Activated naive CD4-positive, alpha-beta T cell treated with anti-CD3 and anti-CD28 coated beads for 36 hours (primary cell): ENCODE measurements at regions of chr7 and their contacts with region 1.

Region 1: DNA sequence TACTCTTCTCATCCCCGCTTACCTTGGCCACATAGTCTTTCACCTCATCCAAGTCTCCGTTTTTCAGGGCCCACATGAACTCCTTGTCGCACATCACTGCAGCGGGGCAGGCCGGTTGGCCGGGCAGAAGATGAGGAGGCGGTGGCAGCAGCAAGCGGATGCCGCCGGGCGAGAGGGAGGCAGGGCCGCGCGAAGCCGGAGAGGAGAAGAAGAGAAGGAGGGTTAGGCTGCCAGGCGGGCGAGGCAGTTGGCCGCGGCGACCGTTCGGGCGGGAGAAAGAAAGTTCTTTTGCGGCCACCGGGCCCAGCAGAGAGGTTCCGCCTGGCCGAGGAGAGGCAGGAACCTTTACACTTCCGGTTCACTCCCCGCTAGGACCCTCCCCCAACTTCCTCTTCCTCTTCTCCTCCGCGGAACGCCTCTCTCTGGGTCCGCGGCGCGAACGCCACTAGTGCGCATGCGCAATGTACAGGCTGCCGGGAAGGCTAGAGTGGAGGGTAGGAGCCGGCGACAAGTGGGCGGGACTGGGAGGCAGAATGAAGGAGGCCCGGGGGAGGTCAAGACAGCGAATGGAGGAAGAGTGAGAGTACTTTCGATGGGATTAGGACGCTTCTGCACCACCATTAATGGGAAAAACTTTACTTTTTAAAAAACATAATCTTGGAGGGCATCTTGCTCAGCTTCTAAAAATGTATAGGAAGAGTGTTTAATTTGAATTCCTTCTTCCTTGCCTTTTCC is at the start of gene MTPN:
- DNase-seq: peak; percentile 98
- H3K4me3 Mint-ChIP-seq: peak within 1 kb of the TSS; percentile 98
- H3K27ac Mint-ChIP-seq: peak within 1 kb of the TSS; percentile 86
- H3K4me1 Mint-ChIP-seq: peaks cover 71% of the 10 kb centered on the region
- H3K27me3 Mint-ChIP-seq: no peaks in the 10 kb centered on the region
- total RNA-seq, gene MTPN: 106 to 108 TPM

Region 2: DNA sequence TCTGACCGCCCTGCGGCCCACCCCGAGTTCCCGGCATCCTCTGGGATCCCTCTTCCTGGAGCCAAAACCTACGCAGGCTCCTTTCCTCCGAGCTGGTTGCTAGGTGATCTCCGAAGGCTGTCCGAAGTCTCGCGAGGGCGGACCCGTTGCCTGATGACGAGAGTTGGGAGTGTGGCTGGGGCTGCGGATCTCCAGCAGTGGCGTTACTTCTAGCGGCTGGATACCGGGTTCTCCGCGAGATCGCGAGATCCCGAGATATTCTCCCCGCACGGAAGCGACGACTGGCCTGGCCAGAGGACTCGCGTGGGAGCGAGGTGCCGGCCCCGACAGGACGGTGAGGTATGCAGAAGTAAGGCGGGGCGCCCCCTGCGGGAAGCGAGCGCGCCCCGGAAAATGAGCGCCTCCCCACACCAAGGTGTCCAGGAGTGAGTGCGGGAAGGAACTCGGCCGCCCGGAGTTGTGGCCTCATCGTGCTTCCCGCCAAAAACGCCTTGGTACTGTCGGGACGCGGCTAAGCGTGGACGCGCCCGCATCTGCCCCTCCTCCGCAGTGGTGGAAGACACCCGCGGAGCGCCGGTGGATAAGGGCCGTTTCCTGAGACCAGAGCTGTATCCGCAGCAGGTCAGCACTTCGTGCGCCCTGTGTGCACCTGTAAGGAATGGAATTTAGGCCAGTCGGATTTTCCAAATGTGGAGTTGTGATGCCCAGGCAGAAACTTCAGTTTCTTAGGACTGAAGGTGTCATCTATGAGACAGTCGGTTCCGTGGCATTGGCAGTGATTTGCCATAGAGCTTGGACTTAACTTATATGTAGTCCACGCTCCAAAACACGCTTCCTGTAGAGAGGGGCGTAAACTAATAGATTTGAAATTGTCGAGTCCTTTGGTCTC is 990.6 kb before region 1 on chr7 and contains the start of gene AGBL3:
- CTCF ChIA-PET with region 1: no interaction called
- intact Hi-C with region 1: loop called (anchors 5 kb)
- DNase-seq: peak; percentile 97
- H3K4me3 Mint-ChIP-seq: peak within 1 kb of the TSS; percentile 96
- H3K27ac Mint-ChIP-seq: peak within 1 kb of the TSS; percentile 98
- H3K4me1 Mint-ChIP-seq: peaks cover 32% of the 10 kb centered on the region
- H3K27me3 Mint-ChIP-seq: no peaks in the 10 kb centered on the region
- total RNA-seq, gene AGBL3: 2.6 to 3.6 TPM

Region 3: GRCh38 chr7:135558337-135558767 is 418.8 kb before region 1 on chr7:
- CTCF ChIA-PET with region 1: no interaction called
- intact Hi-C with region 1: loop called (anchors 1 kb)
- DNase-seq: peak; percentile 79
- H3K4me3 Mint-ChIP-seq: no peak overlapping the region
- H3K27ac Mint-ChIP-seq: no peak overlapping the region
- H3K4me1 Mint-ChIP-seq: peaks cover 29% of the 10 kb centered on the region
- H3K27me3 Mint-ChIP-seq: no peaks in the 10 kb centered on the region

Region 4: DNA sequence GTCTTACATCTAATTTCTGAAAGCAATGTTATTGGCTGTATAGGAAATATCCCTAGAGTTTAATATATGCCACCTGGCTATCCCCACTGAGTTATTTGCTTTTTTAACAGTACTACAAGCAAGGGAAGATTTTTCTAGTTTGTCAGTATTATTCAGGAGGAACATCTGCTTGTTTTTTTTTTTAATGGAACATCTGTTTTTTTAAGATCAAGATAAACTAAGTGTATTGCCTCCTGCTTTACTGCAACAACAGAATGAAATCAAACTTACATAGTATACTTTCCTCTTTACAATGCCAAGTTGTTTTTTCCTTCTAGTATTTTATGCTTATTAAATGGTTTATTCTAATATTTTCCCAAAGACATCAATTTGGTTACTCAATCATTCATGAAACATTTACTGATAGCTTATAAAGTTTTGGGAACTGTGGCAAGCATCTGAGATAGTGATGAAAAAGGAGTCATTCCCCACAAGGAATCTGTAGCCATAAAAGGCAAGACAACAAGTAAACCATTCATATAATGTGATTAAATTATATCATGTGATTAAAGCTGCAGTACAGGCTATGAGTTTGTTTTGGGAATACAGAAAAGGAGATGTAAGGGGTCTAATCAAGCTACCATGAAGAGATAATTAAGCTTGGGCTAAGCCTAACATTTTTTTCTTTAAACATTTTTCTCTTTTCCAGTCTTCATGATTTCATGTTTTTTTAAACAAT is 17.4 kb before region 1 on chr7:
- CTCF ChIA-PET with region 1: no interaction called
- intact Hi-C with region 1: no loop called
- DNase-seq: no peak
- H3K4me3 Mint-ChIP-seq: no peak overlapping the region
- H3K27ac Mint-ChIP-seq: no peak overlapping the region
- H3K4me1 Mint-ChIP-seq: peaks cover 46% of the 10 kb centered on the region
- H3K27me3 Mint-ChIP-seq: no peaks in the 10 kb centered on the region

Region 5: DNA sequence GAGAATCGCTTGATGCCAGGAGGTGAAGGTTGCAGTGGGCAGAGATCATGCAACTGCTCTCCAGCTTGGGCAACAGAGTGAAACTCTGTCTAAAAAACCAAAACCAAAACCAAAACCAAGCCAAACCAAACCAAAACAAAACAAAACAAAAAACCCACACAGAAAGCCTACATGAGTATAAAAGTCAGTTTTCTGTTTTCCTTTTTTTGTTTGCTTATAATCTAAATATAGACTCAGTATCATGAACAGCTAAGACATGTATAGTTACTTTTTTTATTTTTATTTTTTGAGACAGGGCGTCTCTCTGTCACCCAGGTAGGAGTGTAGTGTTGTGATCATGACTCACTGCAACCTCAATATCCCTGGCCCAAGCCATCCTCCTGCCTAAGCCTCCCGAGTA is 16.8 kb after region 1 on chr7:
- CTCF ChIA-PET with region 1: no interaction called
- intact Hi-C with region 1: loop called (anchors 1 kb)
- DNase-seq: no peak
- H3K4me3 Mint-ChIP-seq: no peak overlapping the region
- H3K27ac Mint-ChIP-seq: no peak overlapping the region
- H3K4me1 Mint-ChIP-seq: peaks cover 17% of the 10 kb centered on the region
- H3K27me3 Mint-ChIP-seq: peaks cover 5% of the 10 kb centered on the region

Region 6: GRCh38 chr7:136030862-136031318 is 53.7 kb after region 1 on chr7:
- CTCF ChIA-PET with region 1: no interaction called
- intact Hi-C with region 1: loop called (anchors 1 kb)
- DNase-seq: peak; percentile 38
- H3K4me3 Mint-ChIP-seq: no peak overlapping the region
- H3K27ac Mint-ChIP-seq: peak overlapping the region; percentile 80
- H3K4me1 Mint-ChIP-seq: peaks cover 59% of the 10 kb centered on the region
- H3K27me3 Mint-ChIP-seq: peaks cover 13% of the 10 kb centered on the region